Lower leg skin (tissue), 4 donors: ENCODE measurements at regions of chr1 and their contacts with region 1.

Region 1: DNA sequence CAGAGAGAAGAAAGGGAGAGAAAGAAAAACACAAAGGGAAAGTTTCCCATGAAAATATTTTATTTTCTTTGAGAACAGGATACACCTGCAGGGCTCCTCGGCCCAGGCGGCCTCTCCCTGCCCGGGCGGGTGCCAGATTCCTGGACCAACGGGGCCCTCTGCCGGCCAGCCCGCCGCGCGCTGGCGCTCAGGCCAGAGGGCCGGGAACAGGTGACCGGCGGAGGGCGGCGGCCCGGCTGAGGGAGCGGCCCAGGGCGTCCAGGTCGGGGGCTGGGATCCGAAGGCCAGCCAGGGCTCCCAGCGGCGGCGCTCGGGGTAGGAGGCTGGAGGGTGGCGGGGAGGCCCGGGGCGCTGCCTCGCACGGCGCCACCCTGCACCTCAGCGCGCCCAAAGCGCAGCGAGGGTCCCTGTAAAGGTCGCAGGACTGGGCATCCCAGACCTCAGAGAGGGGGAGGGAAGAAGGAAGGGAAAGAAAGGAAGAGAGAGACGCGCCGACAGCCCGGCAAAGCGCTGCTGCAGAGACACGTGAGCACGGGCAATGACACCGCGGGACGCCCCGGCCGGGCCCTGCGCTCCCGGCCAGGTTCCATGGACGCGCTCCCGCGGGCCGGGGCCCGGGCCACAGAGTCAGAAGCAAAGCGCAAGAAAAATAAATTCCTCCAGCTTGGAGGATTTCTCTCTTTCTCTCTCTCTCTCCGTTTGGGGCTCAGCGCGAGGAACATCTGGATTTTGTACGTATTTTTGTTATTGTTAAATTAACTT is 927 bp downstream of the WNT9A start:
- DNase-seq: peak in 1 of 2 donors; percentile 94
- H3K4me3 ChIP-seq: peak overlapping the region; percentile 11
- CTCF ChIP-seq: no peak
- POLR2A ChIP-seq: no peak

Region 2: GRCh38 chr1:227469708-227470107 is 477.1 kb before region 1 on chr1:
- intact Hi-C with region 1: loop called (anchors 10 kb)
- DNase-seq: no peak
- H3K4me3 ChIP-seq: no peak overlapping the region
- CTCF ChIP-seq: no peak
- POLR2A ChIP-seq: no peak

Region 3: DNA sequence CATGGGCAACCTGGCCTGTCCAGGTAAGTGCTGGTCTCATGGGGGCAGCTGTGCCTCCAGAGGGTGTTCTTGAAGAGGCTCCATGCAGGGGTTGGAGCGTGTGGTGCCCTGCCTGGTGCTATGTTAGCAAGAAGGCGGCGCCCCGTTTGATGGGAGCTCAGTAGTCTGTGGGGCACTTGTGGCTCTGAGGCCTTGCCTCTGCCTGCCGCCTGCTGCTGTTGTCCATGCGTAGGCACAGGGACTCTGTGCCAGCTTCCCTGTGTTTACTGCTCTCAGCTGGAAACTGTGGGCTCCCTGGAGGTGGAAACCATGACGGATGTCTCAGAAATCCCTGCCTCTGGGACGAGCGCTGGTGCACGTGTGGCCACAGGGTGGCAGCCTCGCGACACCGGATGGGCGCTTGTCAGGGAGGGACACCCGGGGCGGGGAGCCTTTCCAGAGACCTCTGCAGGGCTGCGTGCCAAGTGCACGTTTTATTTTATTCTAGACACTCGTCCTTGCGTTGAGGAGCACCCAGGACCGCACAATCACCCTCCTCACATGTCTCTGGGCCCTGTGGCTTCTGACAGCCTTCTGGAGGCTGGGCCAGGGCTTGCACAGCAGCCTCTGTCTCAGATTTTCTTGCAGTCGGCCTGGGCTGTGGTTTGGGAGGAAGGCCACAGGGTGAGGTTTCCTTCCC is 184.4 kb before region 1 on chr1:
- intact Hi-C with region 1: loop called (anchors 5 kb)
- DNase-seq: peak; percentile 75 to 96
- H3K4me3 ChIP-seq: no peak overlapping the region
- CTCF ChIP-seq: peak in 1 of 3 donors; percentile 72
- POLR2A ChIP-seq: no peak